ENCODE measurements at regions of chr1 and their contacts with region 1.

Region 1: GRCh38 chr1:89762779-89763648 is 57.8 kb upstream of the LRRC8D start:
- DNase-seq: peak; percentile 52 to 68
- ATAC-seq: peak; percentile 95
- H3K4me3 ChIP-seq: peak overlapping the region; percentile 49 to 66 (median 62)
- H3K27ac ChIP-seq: peak overlapping the region; percentile 42 to 75 (median 68)
- H3K4me1 ChIP-seq: peaks cover 10 to 24% of the 10 kb centered on the region in 2 donors
- H3K27me3 ChIP-seq: no peaks in the 10 kb centered on the region
- CTCF ChIP-seq: peak; percentile 88 to 99 (median 92)
- POLR2A ChIP-seq: no peak

Region 2: DNA sequence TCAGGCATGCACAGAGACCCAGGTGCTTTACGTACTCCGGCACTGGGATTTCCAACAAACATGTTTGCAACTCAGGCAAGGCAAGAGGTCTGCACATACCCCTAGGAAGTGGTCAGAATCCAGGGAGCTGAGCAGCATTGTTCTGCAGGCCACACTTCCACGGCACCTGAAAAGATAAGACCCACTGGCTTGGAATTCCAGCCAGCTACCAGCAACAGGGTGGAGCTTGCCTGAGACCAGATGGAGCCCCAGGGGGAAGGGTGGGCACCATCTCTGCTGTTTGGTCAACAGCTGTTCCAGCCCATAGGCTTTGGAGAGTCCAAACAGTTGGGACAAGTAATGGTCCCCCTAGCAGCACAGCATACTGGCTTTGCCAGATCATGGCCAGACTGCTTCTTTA is 290.1 kb before region 1 on chr1:
- in situ Hi-C with region 1: loop called in 1 of 4 experiments (anchors 10 kb)
- intact Hi-C with region 1: no loop called
- DNase-seq: no peak
- ATAC-seq: no peak
- H3K4me3 ChIP-seq: no peak overlapping the region
- H3K27ac ChIP-seq: no peak overlapping the region
- H3K4me1 ChIP-seq: no peaks in the 10 kb centered on the region
- H3K27me3 ChIP-seq: no peaks in the 10 kb centered on the region
- CTCF ChIP-seq: no peak
- POLR2A ChIP-seq: no peak

Region 3: GRCh38 chr1:89483010-89483756 is 279.8 kb before region 1 on chr1:
- in situ Hi-C with region 1: loop called in 3 of 4 experiments (anchors 10 kb)
- intact Hi-C with region 1: loop called (anchors 1 kb)
- DNase-seq: peak; percentile 61
- ATAC-seq: peak; percentile 86 to 93
- H3K4me3 ChIP-seq: no peak overlapping the region
- H3K27ac ChIP-seq: no peak overlapping the region
- H3K4me1 ChIP-seq: no peaks in the 10 kb centered on the region
- H3K27me3 ChIP-seq: no peaks in the 10 kb centered on the region
- CTCF ChIP-seq: peak; percentile 52 to 80 (median 67)
- POLR2A ChIP-seq: no peak

Region 4: GRCh38 chr1:89524369-89525168 is 238.4 kb before region 1 on chr1 and contains the start of gene LRRC8B:
- in situ Hi-C with region 1: loop called in 1 of 4 experiments (anchors 25 kb)
- intact Hi-C with region 1: no loop called
- DNase-seq: peak; percentile 87 to 88
- ATAC-seq: peak; percentile 88 to 91
- H3K4me3 ChIP-seq: peak within 1 kb of the TSS; percentile 82 to 99 (median 88)
- H3K27ac ChIP-seq: peak within 1 kb of the TSS; percentile 89 to 98 (median 94)
- H3K4me1 ChIP-seq: peaks cover 36 to 40% of the 10 kb centered on the region in 2 donors
- H3K27me3 ChIP-seq: no peaks in the 10 kb centered on the region
- CTCF ChIP-seq: no peak
- POLR2A ChIP-seq: peak; percentile 90 to 94
- total RNA-seq, gene LRRC8B: 3.5 to 15.7 (median 8.5) TPM

Region 5: DNA sequence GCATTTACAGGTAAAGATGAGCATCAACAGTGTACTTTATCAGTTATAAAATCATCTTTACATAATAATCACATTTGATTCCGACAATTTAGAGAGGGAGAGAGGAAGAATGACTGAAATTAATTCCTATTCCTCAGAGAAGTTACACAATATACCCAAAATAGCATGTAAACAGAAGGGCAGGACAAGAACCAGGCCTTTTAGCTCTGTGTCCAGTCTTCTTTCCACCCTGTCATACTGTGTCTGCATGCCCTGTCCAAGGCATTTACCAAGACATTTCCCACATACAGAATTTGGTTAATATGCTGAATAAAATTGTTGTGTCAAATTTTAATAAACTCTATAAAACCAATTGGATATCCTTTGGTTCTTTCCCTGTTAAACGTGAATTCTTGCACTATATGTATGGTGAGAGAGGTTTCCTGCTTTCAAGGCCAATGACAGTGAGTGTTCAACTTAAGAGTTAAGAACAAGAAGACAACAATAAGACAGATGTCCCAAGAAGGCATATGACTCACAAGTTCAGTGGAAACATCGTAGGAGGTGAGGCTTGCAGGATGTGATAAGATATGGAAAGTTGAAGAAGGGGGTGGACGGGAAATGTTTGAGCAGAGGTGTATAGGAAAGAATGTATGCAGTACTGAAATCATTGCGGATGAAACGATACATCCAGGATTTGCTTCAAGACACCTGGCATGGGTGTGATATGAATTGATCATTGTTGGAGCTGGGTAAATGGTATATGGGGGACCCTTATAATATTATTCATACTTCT is 217.6 kb before region 1 on chr1:
- in situ Hi-C with region 1: no loop called
- intact Hi-C with region 1: no loop called
- DNase-seq: no peak
- ATAC-seq: peak; percentile 59 to 68
- H3K4me3 ChIP-seq: no peak overlapping the region
- H3K27ac ChIP-seq: peak overlapping the region; percentile 55 to 77 (median 71)
- H3K4me1 ChIP-seq: peaks cover 48 to 51% of the 10 kb centered on the region in 2 donors
- H3K27me3 ChIP-seq: no peaks in the 10 kb centered on the region
- CTCF ChIP-seq: no peak
- POLR2A ChIP-seq: no peak

Region 6: DNA sequence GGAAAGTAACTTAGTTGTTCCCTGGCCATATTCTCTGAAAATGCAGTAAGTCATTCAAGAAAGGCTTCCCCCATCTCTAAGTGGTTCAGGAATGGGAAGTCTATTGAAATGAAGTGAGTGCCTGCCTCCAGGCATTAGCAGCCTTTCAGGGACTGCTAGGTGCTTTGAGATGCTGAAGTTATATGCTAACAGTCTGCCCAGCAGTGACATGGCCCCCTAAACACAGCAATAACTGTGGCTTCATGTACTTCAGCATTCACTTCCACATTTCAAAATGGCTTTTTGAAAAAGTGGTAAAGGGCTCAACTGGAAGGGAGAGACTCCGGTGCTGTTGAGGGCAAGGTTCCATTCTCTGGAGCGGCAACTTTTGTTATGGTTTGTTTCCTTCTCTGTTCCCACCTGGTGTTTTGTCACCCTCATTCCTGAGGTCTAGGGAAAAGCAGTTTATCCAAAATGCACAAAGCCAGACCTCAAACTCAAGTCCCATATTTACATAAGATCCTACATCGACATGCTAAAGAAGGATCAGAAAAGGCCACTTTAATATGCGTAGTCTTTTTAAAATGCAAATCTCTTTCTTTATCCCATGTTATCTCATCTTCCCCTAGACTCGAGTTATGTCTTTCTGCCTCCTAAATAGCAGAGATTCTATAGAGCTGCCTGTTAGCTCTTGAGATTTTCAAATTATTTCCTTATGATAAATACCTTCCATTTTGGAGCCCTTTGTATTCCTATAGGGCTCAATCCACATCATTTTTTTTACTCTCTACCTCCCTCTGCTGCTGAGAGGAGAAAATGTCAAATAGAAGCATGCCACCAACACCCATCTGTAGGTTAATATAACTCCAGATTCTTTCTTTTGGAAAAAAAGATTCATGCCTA is 164.3 kb before region 1 on chr1:
- in situ Hi-C with region 1: no loop called
- intact Hi-C with region 1: loop called (anchors 10 kb)
- DNase-seq: no peak
- ATAC-seq: peak; percentile 77 to 84
- H3K4me3 ChIP-seq: no peak overlapping the region
- H3K27ac ChIP-seq: no peak overlapping the region
- H3K4me1 ChIP-seq: peaks cover 3 to 10% of the 10 kb centered on the region in 2 donors
- H3K27me3 ChIP-seq: no peaks in the 10 kb centered on the region
- CTCF ChIP-seq: peak; percentile 60 to 70 (median 69)
- POLR2A ChIP-seq: no peak

Region 7: GRCh38 chr1:89627596-89627962 is 135.4 kb before region 1 on chr1:
- in situ Hi-C with region 1: loop called (anchors 5 to 25 kb)
- intact Hi-C with region 1: no loop called
- DNase-seq: no peak
- ATAC-seq: no peak
- H3K4me3 ChIP-seq: no peak overlapping the region
- H3K27ac ChIP-seq: no peak overlapping the region
- H3K4me1 ChIP-seq: no peaks in the 10 kb centered on the region
- H3K27me3 ChIP-seq: no peaks in the 10 kb centered on the region
- CTCF ChIP-seq: no peak
- POLR2A ChIP-seq: no peak

Region 8: GRCh38 chr1:89632657-89633247 is 130.3 kb before region 1 on chr1 and contains the start of gene LRRC8C:
- in situ Hi-C with region 1: loop called (anchors 5 to 25 kb)
- intact Hi-C with region 1: loop called (anchors 1 kb)
- DNase-seq: peak; percentile 43 to 46
- ATAC-seq: peak; percentile 74 to 75
- H3K4me3 ChIP-seq: peak within 1 kb of the TSS; percentile 58 to 87 (median 82)
- H3K27ac ChIP-seq: peak within 1 kb of the TSS; percentile 77 to 83 (median 79)
- H3K4me1 ChIP-seq: no peaks in the 10 kb centered on the region
- H3K27me3 ChIP-seq: no peaks in the 10 kb centered on the region
- CTCF ChIP-seq: peak; percentile 13 to 71 (median 67)
- POLR2A ChIP-seq: peak; percentile 35 to 70
- total RNA-seq, gene LRRC8C: 2.9 to 5.8 (median 4.1) TPM

Region 9: DNA sequence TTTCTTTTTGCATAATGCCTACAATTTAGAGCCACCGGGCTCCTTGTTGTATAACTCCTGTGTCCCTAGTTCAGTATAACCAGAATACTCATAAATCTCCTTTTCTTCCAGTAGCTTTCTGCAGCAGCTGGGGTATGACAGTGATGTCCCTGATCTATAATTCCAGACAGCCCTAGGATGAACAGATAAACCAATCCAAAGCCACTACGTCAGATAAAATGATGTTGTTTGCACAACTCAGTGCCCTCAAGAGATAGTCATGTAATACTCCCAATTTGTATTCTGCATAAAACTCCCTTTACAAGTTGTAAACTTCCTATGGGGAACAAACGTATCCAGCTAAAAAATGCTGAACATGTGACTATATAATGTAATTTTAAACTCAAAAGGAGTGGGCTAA is 276.6 kb after region 1 on chr1:
- in situ Hi-C with region 1: no loop called
- intact Hi-C with region 1: no loop called
- DNase-seq: no peak
- ATAC-seq: no peak
- H3K4me3 ChIP-seq: no peak overlapping the region
- H3K27ac ChIP-seq: no peak overlapping the region
- H3K4me1 ChIP-seq: no peaks in the 10 kb centered on the region
- H3K27me3 ChIP-seq: no peaks in the 10 kb centered on the region
- CTCF ChIP-seq: no peak
- POLR2A ChIP-seq: no peak